Mammary epithelial cell (primary cell): ENCODE measurements at regions of chr3 and their contacts with region 1.

Region 1: GRCh38 chr3:75814797-75815196 is 29.4 kb upstream of the ZNF717 start:
- DNase-seq: no peak
- H3K4me3 ChIP-seq: no peak overlapping the region
- H3K27ac ChIP-seq: no peak overlapping the region
- H3K4me1 ChIP-seq: no peaks in the 10 kb centered on the region
- H3K27me3 ChIP-seq: no peaks in the 10 kb centered on the region
- CTCF ChIP-seq: no peak

Region 2: DNA sequence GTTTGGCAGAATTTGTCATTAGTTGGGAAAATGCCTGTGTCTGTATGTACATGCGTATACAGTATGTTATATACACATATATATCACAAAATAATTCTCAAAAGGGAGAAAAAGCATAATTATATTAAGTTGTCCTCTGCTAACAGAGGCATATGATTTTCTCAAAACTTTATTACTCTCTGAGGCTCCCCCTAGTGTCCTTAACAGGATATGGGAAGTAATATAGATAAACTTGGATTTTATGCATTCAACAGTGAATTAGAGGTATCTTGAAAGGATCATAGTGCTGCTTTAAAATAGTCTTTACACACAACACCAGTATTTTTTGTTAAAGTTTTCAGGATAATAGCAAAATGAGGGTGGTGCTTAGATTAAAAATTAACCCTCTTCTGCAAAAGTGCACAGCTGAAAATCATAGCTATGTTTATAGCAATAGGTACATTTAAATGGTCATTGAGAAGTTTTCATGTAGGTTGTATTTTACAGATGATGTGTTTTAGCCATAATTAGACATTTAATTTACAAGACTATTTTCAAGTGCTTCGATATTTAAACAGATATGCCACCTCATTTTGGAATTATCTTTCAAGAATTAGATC is 771.1 kb after region 1 on chr3:
- CTCF ChIA-PET with region 1: no interaction called
- dilution Hi-C with region 1: no loop called
- in situ Hi-C with region 1: no loop called
- intact Hi-C with region 1: loop called (anchors 5 kb)
- DNase-seq: no peak
- H3K4me3 ChIP-seq: no peak overlapping the region
- H3K27ac ChIP-seq: no peak overlapping the region
- H3K4me1 ChIP-seq: no peaks in the 10 kb centered on the region
- H3K27me3 ChIP-seq: no peaks in the 10 kb centered on the region
- CTCF ChIP-seq: peak; percentile 60 to 63